ENCODE measurements at regions of chr6 and their contacts with region 1.

Region 1: DNA sequence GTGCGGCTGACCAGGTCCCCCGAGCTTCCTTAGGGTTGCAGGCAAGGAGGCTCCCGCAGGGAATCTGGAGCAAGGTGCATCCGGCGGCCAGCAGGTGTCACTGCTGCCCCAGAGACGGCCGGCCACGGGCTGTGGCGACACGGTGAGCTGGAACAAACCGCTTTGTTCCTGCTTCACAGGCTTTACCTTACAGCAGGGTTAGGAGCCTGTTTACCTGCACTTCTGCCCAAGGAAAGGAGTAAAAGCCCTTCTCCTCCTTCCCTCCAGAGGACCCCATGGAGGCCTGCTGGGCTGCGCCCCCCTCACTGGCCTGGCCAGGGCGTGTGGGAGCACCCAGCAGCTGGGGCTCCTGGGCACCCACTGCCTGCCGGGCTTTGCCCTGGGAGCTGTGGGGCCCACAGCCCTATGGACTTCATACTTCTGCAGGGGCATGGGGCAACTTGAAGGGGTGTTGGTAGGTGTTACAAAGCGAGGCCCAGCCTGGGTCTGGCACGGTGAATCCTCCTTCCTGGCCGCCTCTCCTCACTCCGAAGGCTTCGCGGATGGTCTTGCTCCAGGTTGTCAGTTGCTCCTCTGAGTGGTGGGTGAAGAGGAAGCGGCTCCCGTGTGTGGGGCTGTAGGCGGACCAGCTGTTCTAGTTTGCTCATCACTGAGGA is 88.4 kb downstream of the CDC5L start:
- DNase-seq: peak; percentile 51
- ATAC-seq: peak; percentile 99
- H3K4me3 ChIP-seq: peak overlapping the region in 1 of 2 experiments; percentile 11; a peak in 1 of 4 replicates
- H3K27ac ChIP-seq: peak overlapping the region; percentile 13; the same call in 1 of the 2 replicates
- H3K4me1 ChIP-seq: peaks cover 3 to 12% of the 10 kb centered on the region in 2 experiments; a peak in 3 of 4 replicates
- H3K27me3 ChIP-seq: no peaks in the 10 kb centered on the region
- CTCF ChIP-seq: peak; percentile 82 to 96 (median 86)
- POLR2A ChIP-seq: no peak
- RAD21 ChIP-seq: peak; percentile 99

Region 2: DNA sequence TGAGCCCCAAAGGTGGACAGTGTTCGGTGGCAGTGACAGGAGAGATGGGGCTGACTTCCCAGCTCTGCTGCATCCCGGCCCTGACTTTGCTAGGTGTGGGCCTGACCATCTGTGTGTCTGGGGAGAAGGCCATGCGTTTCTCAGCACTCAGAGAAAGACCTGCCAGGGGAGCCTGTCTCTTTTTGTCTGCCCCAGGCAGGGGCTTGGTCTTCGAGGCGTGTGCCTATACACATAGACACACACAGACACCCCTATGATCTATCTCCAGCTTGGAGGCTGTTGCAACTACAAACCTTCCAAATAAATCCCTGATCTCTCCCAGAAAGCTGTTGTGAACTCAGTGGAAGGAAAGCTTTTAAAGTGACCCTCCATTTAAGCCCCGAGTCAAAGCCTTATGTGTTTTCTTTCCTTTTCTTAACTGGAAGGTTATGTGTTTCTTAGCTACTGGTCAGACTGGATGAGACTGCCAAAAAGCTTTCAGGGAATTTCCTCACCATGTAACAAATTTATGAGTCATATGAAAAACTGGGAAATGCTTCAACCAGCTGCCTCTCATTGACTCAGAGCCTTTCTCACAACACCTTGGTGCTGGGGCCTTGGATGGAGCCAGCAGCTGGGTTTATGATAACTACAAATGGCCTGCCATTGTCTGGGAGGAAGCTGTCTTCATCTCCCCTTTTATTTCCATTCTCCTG is 14.2 kb after region 1 on chr6:
- CTCF ChIA-PET with region 1: interaction called, 28 read pairs
- POLR2A ChIA-PET with region 1: interaction called, 6 read pairs
- RAD21 ChIA-PET with region 1: interaction called, 8 to 9 read pairs
- intact Hi-C with region 1: no loop called
- DNase-seq: peak; percentile 16
- ATAC-seq: peak; percentile 22; the same call in 1 of the 2 replicates
- H3K4me3 ChIP-seq: no peak overlapping the region
- H3K27ac ChIP-seq: no peak overlapping the region
- H3K4me1 ChIP-seq: peaks cover 5 to 33% of the 10 kb centered on the region in 2 experiments; a peak in 3 of 4 replicates
- H3K27me3 ChIP-seq: no peaks in the 10 kb centered on the region
- CTCF ChIP-seq: no peak
- POLR2A ChIP-seq: no peak
- RAD21 ChIP-seq: no peak

Region 3: GRCh38 chr6:44630125-44631028 is 154.5 kb after region 1 on chr6:
- CTCF ChIA-PET with region 1: interaction called, 60 read pairs
- POLR2A ChIA-PET with region 1: interaction called, 3 read pairs
- RAD21 ChIA-PET with region 1: interaction called, 8 to 11 read pairs
- intact Hi-C with region 1: loop called (anchors 5 kb)
- DNase-seq: peak; percentile 42
- ATAC-seq: peak; percentile 97
- H3K4me3 ChIP-seq: no peak overlapping the region
- H3K27ac ChIP-seq: no peak overlapping the region
- H3K4me1 ChIP-seq: peaks cover 0 to 7% of the 10 kb centered on the region in 2 experiments; a peak in 1 of 4 replicates
- H3K27me3 ChIP-seq: no peaks in the 10 kb centered on the region
- CTCF ChIP-seq: peak; percentile 64 to 77 (median 73); a peak in 5 of 6 replicates
- POLR2A ChIP-seq: no peak
- RAD21 ChIP-seq: peak; percentile 89

Region 4: GRCh38 chr6:44655412-44656342 is 179.8 kb after region 1 on chr6:
- CTCF ChIA-PET with region 1: interaction called, 25 read pairs
- POLR2A ChIA-PET with region 1: no interaction called
- RAD21 ChIA-PET with region 1: interaction called, 3 to 7 read pairs
- intact Hi-C with region 1: no loop called
- DNase-seq: peak; percentile 23
- ATAC-seq: peak; percentile 92
- H3K4me3 ChIP-seq: peak overlapping the region in 1 of 2 experiments; percentile 25; a peak in 1 of 4 replicates
- H3K27ac ChIP-seq: no peak overlapping the region
- H3K4me1 ChIP-seq: peaks cover 0 to 8% of the 10 kb centered on the region in 2 experiments; a peak in 2 of 4 replicates
- H3K27me3 ChIP-seq: no peaks in the 10 kb centered on the region
- CTCF ChIP-seq: peak; percentile 69 to 98 (median 93); a peak in 5 of 6 replicates
- POLR2A ChIP-seq: no peak
- RAD21 ChIP-seq: peak; percentile 97

Region 5: GRCh38 chr6:44869321-44869897 is 393.5 kb after region 1 on chr6:
- CTCF ChIA-PET with region 1: no interaction called
- POLR2A ChIA-PET with region 1: no interaction called
- RAD21 ChIA-PET with region 1: no interaction called
- intact Hi-C with region 1: no loop called
- DNase-seq: no peak
- ATAC-seq: no peak
- H3K4me3 ChIP-seq: no peak overlapping the region
- H3K27ac ChIP-seq: no peak overlapping the region
- H3K4me1 ChIP-seq: no peaks in the 10 kb centered on the region
- H3K27me3 ChIP-seq: no peaks in the 10 kb centered on the region
- CTCF ChIP-seq: no peak
- POLR2A ChIP-seq: no peak
- RAD21 ChIP-seq: no peak

Region 6: DNA sequence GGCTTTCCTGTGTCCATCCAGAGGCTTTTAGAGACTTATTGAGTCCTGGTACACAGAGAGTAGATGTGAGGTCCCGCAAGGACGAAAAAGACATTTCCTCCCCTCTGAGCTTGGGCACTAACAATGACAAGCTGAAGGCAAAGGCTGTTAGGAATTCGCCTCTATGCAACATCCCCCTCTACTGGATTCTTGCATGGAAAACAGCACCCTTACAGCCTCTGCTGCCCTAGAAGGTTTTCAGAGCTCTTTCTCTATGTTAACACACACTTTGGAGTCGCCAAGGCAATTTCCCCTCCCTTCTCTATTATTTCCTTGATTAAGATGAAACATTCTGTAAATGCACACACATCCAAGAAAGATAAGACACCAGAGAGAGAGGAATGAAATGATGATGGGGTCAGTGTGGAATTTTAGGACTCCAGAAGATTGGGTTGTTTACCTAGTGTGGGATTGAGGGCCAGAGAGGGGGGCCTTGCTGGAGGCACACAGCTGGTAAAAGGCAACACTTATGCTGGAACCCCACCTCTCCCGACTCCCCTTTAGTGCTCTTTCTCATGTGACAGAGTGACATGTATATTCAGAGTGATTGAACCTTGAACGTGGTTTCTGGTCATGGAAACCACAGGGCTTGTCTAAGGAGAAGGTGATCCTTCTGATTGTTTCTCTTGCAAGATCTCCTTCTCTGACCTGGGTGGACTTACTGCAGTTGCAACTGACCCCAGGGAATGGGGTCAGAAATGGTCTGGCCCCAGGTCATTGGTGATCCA is 1239.0 kb after region 1 on chr6:
- CTCF ChIA-PET with region 1: interaction called, 19 read pairs
- POLR2A ChIA-PET with region 1: no interaction called
- RAD21 ChIA-PET with region 1: interaction called in 1 of 2 experiments, 4 read pairs
- intact Hi-C with region 1: loop called (anchors 10 kb)
- DNase-seq: peak; percentile 73
- ATAC-seq: peak; percentile 98
- H3K4me3 ChIP-seq: no peak overlapping the region
- H3K27ac ChIP-seq: no peak overlapping the region
- H3K4me1 ChIP-seq: peaks cover 0 to 4% of the 10 kb centered on the region in 2 experiments; a peak in 2 of 4 replicates
- H3K27me3 ChIP-seq: no peaks in the 10 kb centered on the region
- CTCF ChIP-seq: peak; percentile 78 to 81 (median 80)
- POLR2A ChIP-seq: no peak
- RAD21 ChIP-seq: peak; percentile 93

Region 7: GRCh38 chr6:46410334-46410953 is 1934.5 kb after region 1 on chr6:
- CTCF ChIA-PET with region 1: no interaction called
- POLR2A ChIA-PET with region 1: no interaction called
- RAD21 ChIA-PET with region 1: no interaction called
- intact Hi-C with region 1: loop called (anchors 5 kb)
- DNase-seq: peak; percentile 32
- ATAC-seq: peak; percentile 44; the same call in 1 of the 2 replicates
- H3K4me3 ChIP-seq: no peak overlapping the region
- H3K27ac ChIP-seq: no peak overlapping the region
- H3K4me1 ChIP-seq: no peaks in the 10 kb centered on the region
- H3K27me3 ChIP-seq: no peaks in the 10 kb centered on the region
- CTCF ChIP-seq: peak; percentile 49 to 77 (median 76); a peak in 5 of 6 replicates
- POLR2A ChIP-seq: no peak
- RAD21 ChIP-seq: peak; percentile 91